Endothelial cell of umbilical vein (primary cell): ENCODE measurements at regions of chr22 and their contacts with region 1.

Region 1: GRCh38 chr22:37457093-37457893 is 28.9 kb downstream of the MFNG start:
- DNase-seq: peak; percentile 60
- H3K4me3 ChIP-seq: no peak overlapping the region
- H3K27ac ChIP-seq: no peak overlapping the region
- H3K4me1 ChIP-seq: peaks cover 24% of the 10 kb centered on the region
- H3K27me3 ChIP-seq: no peaks in the 10 kb centered on the region
- CTCF ChIP-seq: peak; percentile 93 to 94
- POLR2A ChIP-seq: no peak

Region 2: DNA sequence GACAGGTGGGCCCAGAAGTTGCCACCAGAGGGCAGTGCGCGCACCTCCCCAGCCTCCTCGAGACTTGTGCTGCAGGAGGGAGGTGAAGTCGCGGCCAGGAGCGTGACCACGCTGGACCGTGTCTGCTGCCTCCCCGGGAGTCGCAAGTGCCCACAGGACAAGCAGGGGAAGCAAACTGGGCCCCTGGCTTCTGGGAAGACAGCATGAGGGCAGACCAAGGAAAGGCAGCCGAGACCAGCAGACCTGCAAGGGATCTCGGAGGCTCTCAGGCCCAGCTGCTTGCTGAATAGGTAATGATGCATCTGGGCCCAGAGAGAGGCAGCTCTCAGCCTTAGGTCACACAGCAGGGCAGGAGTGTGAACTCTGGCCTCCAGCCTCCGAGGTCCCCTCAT is 290.6 kb before region 1 on chr22:
- CTCF ChIA-PET with region 1: no interaction called
- POLR2A ChIA-PET with region 1: no interaction called
- dilution Hi-C with region 1: no loop called
- intact Hi-C with region 1: loop called (anchors 2 kb)
- DNase-seq: peak; percentile 82
- H3K4me3 ChIP-seq: no peak overlapping the region
- H3K27ac ChIP-seq: no peak overlapping the region
- H3K4me1 ChIP-seq: no peaks in the 10 kb centered on the region
- H3K27me3 ChIP-seq: no peaks in the 10 kb centered on the region
- CTCF ChIP-seq: peak; percentile 92 to 95
- POLR2A ChIP-seq: no peak

Region 3: GRCh38 chr22:37254209-37254866 is 203.0 kb before region 1 on chr22:
- CTCF ChIA-PET with region 1: interaction called, 22 read pairs
- POLR2A ChIA-PET with region 1: no interaction called
- dilution Hi-C with region 1: no loop called
- intact Hi-C with region 1: loop called (anchors 1 kb)
- DNase-seq: peak; percentile 76
- H3K4me3 ChIP-seq: peak overlapping the region in 2 of 3 experiments; percentile 10 to 43
- H3K27ac ChIP-seq: peak overlapping the region; percentile 99
- H3K4me1 ChIP-seq: peaks cover 31% of the 10 kb centered on the region
- H3K27me3 ChIP-seq: no peaks in the 10 kb centered on the region
- CTCF ChIP-seq: no peak
- POLR2A ChIP-seq: no peak

Region 4: DNA sequence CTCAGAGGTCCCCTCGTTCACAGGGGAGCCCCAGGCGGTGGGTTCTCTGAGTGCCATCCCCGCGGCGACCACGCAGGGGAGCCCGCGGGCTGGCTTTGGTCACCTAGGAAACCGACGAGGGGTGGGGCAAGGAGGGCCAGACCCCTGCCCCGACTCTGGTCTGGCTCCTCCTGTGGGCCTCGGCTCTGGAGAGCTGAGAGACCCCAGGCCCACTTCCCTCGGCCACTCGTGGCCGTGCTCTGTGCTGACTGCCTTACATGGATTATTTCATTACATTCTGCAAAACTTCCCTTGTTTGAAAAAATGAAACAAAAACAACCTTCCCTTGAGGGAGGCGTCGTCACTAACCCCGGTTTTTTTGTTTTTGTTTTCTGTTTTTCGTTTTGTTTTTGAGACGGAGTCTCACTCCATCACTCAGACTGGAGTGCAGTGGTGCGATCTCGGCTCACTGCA is 190.1 kb before region 1 on chr22:
- CTCF ChIA-PET with region 1: interaction called, 6 read pairs
- POLR2A ChIA-PET with region 1: no interaction called
- dilution Hi-C with region 1: no loop called
- intact Hi-C with region 1: loop called (anchors 1 kb)
- DNase-seq: peak; percentile 52
- H3K4me3 ChIP-seq: peak overlapping the region; percentile 36 to 61 (median 48)
- H3K27ac ChIP-seq: peak overlapping the region; percentile 42
- H3K4me1 ChIP-seq: peaks cover 15% of the 10 kb centered on the region
- H3K27me3 ChIP-seq: no peaks in the 10 kb centered on the region
- CTCF ChIP-seq: peak; percentile 81 to 91
- POLR2A ChIP-seq: no peak

Region 5: GRCh38 chr22:37324340-37325038 is 132.8 kb before region 1 on chr22:
- CTCF ChIA-PET with region 1: interaction called, 168 read pairs
- POLR2A ChIA-PET with region 1: no interaction called
- dilution Hi-C with region 1: no loop called
- intact Hi-C with region 1: no loop called
- DNase-seq: no peak
- H3K4me3 ChIP-seq: no peak overlapping the region
- H3K27ac ChIP-seq: no peak overlapping the region
- H3K4me1 ChIP-seq: peaks cover 29% of the 10 kb centered on the region
- H3K27me3 ChIP-seq: peaks cover 0 to 5% of the 10 kb centered on the region in 2 experiments
- CTCF ChIP-seq: no peak
- POLR2A ChIP-seq: no peak

Region 6: DNA sequence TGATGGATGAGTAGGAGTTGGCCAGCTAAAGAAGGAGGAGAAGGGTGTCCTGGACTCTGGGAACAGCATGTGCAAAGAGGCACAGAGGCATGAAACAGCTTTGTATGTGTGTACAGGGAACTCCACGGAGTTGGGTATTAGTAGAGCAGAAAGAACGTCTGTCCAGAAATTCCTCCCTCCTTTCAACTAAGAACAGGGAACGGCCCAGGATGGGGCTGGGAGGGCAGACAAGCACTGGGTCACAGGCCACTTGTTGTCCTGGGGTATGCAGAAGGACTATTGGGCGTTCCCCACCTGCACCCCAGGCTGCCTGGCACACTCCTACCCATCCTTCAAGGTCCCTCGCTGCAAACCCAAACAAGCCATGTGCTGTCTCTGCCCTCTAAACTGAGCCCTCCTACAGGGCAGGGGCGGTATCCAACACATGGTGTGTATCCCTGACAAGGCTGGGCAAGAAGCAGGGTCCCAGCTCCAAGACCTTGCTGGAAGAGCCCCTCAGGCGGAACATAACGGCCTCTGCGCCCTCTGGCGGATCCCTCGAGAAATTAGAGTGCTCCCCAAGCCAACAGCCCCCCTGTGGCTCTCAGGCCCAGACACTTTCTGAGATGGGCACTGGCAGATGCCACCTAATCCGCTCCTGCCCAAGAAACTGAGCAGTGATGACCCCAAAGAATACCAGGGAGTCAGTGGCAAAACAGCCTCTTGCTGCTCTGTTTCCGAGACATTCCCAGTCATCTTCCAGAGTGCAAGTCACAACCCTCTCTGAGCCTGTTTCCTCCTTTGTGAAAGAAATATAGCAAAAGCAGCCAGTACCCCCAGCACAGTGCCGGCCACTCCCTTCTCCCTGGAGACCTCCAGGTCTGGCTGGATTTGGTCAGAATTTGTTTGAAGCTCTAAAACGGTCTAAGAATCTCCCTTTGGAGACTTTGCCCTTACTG is 28.4 kb before region 1 on chr22:
- CTCF ChIA-PET with region 1: interaction called, 47 read pairs
- POLR2A ChIA-PET with region 1: interaction called, 6 read pairs
- dilution Hi-C with region 1: no loop called
- intact Hi-C with region 1: loop called (anchors 1 kb)
- DNase-seq: peak; percentile 56
- H3K4me3 ChIP-seq: no peak overlapping the region
- H3K27ac ChIP-seq: no peak overlapping the region
- H3K4me1 ChIP-seq: peaks cover 24% of the 10 kb centered on the region
- H3K27me3 ChIP-seq: peaks cover 0 to 8% of the 10 kb centered on the region in 2 experiments
- CTCF ChIP-seq: peak; percentile 64 to 83
- POLR2A ChIP-seq: no peak

Region 7: DNA sequence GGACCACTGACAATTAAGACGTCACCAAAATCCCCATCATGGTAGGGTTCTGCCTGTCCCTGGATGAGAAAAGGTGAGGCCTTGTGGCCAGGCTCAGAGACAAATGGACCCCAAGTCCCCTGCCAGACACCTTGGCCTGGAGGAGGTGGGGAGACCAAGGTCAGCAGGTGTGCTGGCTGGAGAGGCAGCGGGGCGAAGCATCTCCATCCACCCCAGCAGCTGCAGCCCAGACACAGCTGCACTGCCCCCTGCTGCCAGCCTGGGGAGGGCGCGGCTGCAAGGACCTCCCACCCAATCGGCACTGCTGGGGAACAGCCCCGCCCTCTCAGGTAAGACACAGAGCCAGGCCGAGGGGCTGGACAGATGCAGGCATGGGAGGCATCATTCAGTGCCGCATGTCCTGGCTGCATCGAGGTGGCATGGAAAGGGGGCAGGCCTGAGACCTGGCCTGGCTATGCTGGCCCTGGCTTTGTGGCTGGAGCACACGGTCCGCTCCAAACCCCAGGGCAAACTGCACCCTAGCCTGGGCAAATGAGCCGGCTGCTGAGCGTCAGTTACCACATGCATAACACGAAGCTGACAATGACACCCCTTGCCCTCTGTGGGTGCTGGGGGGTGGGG is 41.1 kb after region 1 on chr22:
- CTCF ChIA-PET with region 1: no interaction called
- POLR2A ChIA-PET with region 1: no interaction called
- dilution Hi-C with region 1: no loop called
- intact Hi-C with region 1: no loop called
- DNase-seq: peak; percentile 20
- H3K4me3 ChIP-seq: no peak overlapping the region
- H3K27ac ChIP-seq: no peak overlapping the region
- H3K4me1 ChIP-seq: peaks cover 51% of the 10 kb centered on the region
- H3K27me3 ChIP-seq: no peaks in the 10 kb centered on the region
- CTCF ChIP-seq: peak; percentile 51 to 72
- POLR2A ChIP-seq: no peak